MCF 10A (cell line): ENCODE measurements at regions of chr2 and their contacts with region 1.

Region 1: GRCh38 chr2:237674731-237675276 is 47.4 kb downstream of the LRRFIP1 start:
- DNase-seq: peak; percentile 59
- H3K4me3 Mint-ChIP-seq: peak overlapping the region; percentile 58
- H3K27ac Mint-ChIP-seq: peak overlapping the region; percentile 96
- H3K4me1 Mint-ChIP-seq: peaks cover 14% of the 10 kb centered on the region
- H3K27me3 Mint-ChIP-seq: no peaks in the 10 kb centered on the region
- CTCF ChIP-seq: no peak

Region 2: GRCh38 chr2:237662671-237663093 is 12.1 kb before region 1 on chr2:
- CTCF ChIA-PET with region 1: interaction called, 19 read pairs
- POLR2A ChIA-PET with region 1: interaction called, 10 read pairs
- intact Hi-C with region 1: no loop called
- DNase-seq: peak; percentile 93
- H3K4me3 Mint-ChIP-seq: peak overlapping the region; percentile 26
- H3K27ac Mint-ChIP-seq: peak overlapping the region; percentile 71
- H3K4me1 Mint-ChIP-seq: peaks cover 12% of the 10 kb centered on the region
- H3K27me3 Mint-ChIP-seq: peaks cover 15% of the 10 kb centered on the region
- CTCF ChIP-seq: no peak

Region 3: DNA sequence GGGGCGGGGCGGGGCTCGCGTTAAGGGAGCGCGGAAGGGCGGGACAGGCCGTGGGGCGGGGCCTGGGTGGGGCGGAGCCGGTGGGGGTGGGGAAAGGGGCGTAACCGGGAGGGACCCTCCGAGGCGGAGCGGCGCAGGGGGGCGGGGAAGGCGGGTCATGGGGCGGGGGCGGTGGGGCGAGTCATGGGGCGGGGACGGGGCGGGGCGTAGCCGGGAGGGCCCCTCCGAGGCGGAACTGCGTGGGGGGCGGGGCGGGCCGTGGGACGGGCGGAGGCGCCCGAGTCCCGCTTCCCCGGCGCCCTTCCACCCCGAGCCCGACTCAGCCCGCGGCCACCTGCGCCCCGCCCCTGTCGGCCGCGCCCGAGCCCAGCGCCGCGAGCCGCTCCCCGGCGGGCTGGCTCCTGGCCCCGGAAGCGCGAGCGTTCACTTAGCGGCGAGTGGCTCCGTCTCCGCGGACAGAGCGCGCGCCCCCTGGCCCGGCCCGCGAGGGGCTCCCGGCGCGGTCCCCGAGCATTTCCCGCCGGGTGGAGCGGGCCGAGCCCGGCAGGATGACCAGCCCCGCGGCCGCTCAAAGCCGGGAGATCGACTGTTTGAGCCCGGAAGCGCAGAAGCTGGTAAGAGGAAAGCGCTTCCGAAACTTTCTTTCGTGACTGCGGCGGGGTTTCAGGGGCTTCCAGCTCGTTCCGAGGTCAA is 17.2 kb after region 1 on chr2:
- CTCF ChIA-PET with region 1: interaction called, 45 read pairs
- POLR2A ChIA-PET with region 1: interaction called, 150 read pairs
- intact Hi-C with region 1: loop called (anchors 1 kb)
- DNase-seq: peak; percentile 91
- H3K4me3 Mint-ChIP-seq: peak overlapping the region; percentile 83
- H3K27ac Mint-ChIP-seq: peak overlapping the region; percentile 98
- H3K4me1 Mint-ChIP-seq: peaks cover 51% of the 10 kb centered on the region
- H3K27me3 Mint-ChIP-seq: no peaks in the 10 kb centered on the region
- CTCF ChIP-seq: no peak

Region 4: GRCh38 chr2:237731663-237732062 is 56.9 kb after region 1 on chr2:
- CTCF ChIA-PET with region 1: interaction called, 49 read pairs
- POLR2A ChIA-PET with region 1: interaction called, 5 read pairs
- intact Hi-C with region 1: no loop called
- DNase-seq: peak; percentile 86
- H3K4me3 Mint-ChIP-seq: peak overlapping the region; percentile 45
- H3K27ac Mint-ChIP-seq: peak overlapping the region; percentile 62
- H3K4me1 Mint-ChIP-seq: peaks cover 34% of the 10 kb centered on the region
- H3K27me3 Mint-ChIP-seq: no peaks in the 10 kb centered on the region
- CTCF ChIP-seq: no peak

Region 5: GRCh38 chr2:237752761-237753165 is 78.0 kb after region 1 on chr2:
- CTCF ChIA-PET with region 1: interaction called, 206 read pairs
- POLR2A ChIA-PET with region 1: interaction called, 3 read pairs
- intact Hi-C with region 1: no loop called
- DNase-seq: no peak
- H3K4me3 Mint-ChIP-seq: no peak overlapping the region
- H3K27ac Mint-ChIP-seq: no peak overlapping the region
- H3K4me1 Mint-ChIP-seq: no peaks in the 10 kb centered on the region
- H3K27me3 Mint-ChIP-seq: no peaks in the 10 kb centered on the region
- CTCF ChIP-seq: no peak

Region 6: DNA sequence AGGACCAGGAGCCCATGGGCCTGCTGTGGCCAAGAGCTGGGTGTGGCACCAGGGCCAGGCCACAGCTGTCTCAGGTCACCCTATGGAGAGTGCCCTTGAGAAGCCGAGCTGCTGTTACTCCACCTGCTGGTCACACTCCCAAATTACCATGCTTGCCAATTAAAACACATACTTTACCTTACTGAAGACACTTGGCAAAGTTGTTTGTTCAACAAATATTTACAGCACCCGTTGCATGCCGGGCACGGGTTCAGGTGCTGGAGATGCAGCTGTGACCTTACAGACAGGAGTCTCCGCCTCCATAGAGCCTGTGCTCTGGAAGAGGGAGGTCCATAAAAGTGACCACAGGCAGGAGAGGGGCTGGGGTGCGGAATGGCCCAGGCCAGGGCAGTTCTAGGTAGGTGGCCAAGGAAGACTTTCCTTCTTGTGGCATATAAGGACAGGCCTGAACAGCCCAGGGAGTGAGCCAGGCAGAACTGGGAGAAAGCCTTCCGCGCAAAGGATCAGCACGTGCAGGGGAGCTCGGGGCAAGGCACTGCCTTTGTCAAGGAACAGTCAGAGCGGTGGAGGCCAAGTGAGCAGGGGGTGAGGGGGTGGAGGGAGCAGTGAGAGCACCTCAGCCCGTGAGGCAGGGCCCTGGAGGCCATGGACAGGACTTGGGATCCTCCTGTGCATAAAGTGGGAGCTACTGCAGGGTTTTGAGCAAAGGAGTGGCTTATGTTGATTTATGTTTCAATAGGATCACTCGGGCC is 100.2 kb after region 1 on chr2:
- CTCF ChIA-PET with region 1: interaction called, 17 read pairs
- POLR2A ChIA-PET with region 1: interaction called, 3 read pairs
- intact Hi-C with region 1: loop called (anchors 1 kb)
- DNase-seq: peak; percentile 60
- H3K4me3 Mint-ChIP-seq: no peak overlapping the region
- H3K27ac Mint-ChIP-seq: peak overlapping the region; percentile 62
- H3K4me1 Mint-ChIP-seq: no peaks in the 10 kb centered on the region
- H3K27me3 Mint-ChIP-seq: no peaks in the 10 kb centered on the region
- CTCF ChIP-seq: peak; percentile 59

Region 7: DNA sequence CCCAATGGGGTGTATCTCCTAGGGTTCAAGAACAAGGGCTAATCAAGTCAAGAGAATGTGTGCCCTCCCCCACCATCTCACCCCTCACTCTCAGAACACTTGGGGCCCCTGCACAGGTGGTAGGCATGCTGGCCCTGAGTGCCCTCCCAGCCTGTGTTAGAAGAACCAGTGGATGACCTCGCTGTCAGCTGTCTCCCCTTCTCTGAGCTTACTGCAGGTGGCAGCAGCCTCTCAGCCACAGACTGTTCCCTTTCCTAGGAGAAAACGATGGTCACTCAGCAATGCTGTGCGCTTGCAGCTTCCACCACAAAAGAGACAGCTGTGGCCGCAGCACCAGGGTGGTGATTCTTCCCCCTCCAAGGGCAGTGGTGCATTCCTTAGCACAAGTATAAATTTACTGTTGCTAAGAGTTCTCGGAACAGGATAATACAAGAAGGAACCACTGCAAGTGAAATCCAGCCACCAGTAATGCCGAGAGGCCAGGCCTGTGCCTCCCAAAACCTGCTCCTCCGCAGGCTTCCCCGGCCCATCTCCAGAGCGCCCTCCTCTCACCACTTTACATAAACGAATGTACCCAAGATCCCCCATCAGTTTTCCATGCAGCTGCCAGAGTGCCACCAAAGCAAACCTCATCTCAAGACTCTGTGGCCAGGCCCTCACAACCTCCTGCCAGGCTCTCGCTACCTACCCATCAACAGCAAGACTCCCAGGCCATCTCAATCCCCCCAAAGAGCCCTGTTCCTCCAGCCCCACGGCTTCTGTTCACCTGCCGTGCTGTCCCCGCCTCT is 183.7 kb after region 1 on chr2:
- CTCF ChIA-PET with region 1: no interaction called
- POLR2A ChIA-PET with region 1: no interaction called
- intact Hi-C with region 1: no loop called
- DNase-seq: peak; percentile 84
- H3K4me3 Mint-ChIP-seq: peak overlapping the region; percentile 43
- H3K27ac Mint-ChIP-seq: no peak overlapping the region
- H3K4me1 Mint-ChIP-seq: peaks cover 8% of the 10 kb centered on the region
- H3K27me3 Mint-ChIP-seq: no peaks in the 10 kb centered on the region
- CTCF ChIP-seq: peak; percentile 81